Left cardiac atrium (tissue), 4 donors: ENCODE measurements at regions of chr5 and their contacts with region 1.

Region 1: GRCh38 chr5:96763026-96763425 is 44.7 kb downstream of the ERAP1 start:
- DNase-seq: no peak
- ATAC-seq: no peak

Region 2: GRCh38 chr5:96315431-96315830 is 447.6 kb before region 1 on chr5:
- intact Hi-C with region 1: no loop called
- DNase-seq: no peak
- ATAC-seq: no peak

Region 3: GRCh38 chr5:96896806-96897205 is 133.8 kb after region 1 on chr5:
- intact Hi-C with region 1: no loop called
- DNase-seq: no peak
- ATAC-seq: peak in 1 of 2 donors; percentile 35

Region 4: DNA sequence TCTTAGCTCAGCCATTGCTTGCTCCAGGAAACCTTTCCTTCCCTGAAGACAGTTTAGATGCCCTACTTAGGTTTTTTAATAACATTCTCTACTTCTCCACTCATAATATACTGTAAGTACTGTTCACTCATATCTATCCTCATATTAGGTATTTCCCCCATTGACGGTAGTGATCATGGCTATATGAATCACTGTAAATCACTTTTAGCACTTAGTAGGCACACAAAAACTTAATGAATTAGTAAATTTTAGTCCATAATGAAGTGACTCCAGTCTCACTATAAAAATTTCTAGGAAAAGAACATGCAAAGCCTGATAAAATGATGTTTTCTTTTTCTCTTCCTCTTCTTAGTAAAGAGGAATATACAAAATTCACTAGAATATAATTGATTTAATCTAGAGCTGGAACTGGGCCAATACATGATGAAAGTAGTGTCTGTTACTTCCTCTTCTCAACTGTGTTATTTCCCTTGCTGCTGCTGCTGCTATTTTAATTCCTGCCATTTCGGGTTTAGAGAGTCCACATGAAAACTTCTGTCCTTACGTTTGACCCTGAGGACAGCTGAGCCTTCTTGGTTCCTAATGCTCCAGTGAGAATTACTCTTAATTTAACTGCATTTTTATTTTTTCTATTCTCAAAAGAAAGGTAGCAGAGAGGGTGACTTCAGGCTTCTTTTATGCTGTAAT is 246.3 kb after region 1 on chr5:
- intact Hi-C with region 1: loop called in 1 of 2 experiments (anchors 10 kb)
- DNase-seq: no peak
- ATAC-seq: peak; percentile 44 to 47